ENCODE measurements at regions of chr20 and their contacts with region 1.

Region 1: DNA sequence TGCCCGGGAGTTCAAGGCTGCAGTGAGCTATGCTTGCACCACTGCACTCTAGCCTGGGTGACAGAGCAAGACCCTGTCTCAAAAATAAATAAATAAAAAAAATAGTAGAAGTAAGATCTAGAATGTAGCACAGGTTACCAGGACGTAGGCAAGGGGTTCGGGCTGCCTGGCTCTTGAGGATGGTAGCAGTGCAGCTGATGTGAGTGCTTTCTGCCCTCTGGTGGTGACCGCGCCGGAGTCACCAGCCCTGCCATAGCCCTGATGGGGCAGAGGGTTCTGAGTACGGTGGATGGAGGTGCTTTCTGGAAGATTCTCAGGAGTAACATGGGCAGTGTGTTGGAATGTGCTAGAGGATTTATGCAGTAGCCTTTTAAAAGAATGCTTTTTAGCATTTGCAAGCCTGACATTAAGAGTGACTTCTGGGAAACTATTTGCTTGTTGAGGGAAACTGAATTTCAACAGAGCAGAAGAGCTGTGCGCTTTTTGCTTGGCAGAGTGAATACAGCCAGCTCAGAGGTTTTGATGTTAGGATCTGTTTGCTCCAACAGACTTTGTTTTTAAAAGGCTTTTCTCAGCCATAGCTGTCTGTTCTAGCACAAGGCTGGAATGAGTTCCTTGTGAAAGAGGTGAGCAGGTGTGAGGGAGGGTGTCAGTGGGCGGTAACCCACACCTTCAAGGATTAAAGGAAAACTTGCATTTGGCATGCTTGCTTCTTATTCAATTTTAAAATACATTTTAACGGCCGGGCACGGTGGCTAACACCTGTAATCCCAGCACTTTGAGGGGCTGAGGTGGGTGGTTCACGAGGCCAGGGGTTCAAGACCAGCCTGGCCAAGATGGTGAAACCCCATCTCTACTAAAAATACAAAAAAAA is 65.9 kb downstream of the PTPN1 start:
- DNase-seq: no peak

Region 2: DNA sequence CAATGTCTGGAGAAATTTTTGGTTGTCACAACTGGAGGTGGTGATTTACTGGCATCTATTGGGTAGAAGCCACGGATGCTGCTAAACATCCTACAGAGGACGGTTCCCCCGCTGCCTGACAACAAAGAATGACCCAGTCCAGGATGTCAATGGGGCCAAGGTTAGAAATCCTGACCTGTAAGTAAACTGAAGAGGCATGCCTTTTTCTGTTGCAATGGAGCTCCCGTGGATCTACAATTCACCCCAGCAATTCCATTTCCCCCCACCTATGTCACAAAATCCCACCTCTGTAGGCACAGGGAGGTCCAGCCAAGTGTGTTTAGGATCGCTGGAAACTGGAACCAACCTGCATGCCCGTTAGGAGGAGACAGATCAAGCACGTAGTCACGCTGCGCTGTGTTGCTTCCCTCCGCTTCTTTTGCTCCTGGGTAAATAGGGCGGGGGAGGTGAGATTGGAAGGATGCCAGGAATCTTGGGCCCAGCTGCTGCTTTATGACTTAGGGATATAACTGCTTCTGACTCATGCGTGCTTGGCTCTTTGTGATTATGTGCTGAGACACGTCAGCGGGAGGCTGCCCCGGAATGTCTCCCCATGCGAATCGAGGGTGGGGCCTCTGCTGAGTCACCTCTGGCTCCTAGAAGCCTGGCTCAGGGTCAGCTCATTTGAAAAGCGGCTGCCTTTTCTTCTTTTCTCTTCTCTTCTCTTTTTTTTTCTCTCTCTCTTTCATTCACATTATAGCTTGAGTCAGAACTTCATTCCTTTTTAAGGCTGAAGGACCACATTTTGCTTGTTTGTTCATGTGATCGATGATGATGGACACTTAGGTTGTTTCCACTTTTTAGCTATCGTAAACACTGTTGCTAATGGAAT is 410.2 kb before region 1 on chr20:
- intact Hi-C with region 1: no loop called
- DNase-seq: peak; percentile 98

Region 3: GRCh38 chr20:50308513-50309279 is 267.4 kb before region 1 on chr20:
- intact Hi-C with region 1: loop called (anchors 10 kb)
- DNase-seq: peak; percentile 97

Region 4: DNA sequence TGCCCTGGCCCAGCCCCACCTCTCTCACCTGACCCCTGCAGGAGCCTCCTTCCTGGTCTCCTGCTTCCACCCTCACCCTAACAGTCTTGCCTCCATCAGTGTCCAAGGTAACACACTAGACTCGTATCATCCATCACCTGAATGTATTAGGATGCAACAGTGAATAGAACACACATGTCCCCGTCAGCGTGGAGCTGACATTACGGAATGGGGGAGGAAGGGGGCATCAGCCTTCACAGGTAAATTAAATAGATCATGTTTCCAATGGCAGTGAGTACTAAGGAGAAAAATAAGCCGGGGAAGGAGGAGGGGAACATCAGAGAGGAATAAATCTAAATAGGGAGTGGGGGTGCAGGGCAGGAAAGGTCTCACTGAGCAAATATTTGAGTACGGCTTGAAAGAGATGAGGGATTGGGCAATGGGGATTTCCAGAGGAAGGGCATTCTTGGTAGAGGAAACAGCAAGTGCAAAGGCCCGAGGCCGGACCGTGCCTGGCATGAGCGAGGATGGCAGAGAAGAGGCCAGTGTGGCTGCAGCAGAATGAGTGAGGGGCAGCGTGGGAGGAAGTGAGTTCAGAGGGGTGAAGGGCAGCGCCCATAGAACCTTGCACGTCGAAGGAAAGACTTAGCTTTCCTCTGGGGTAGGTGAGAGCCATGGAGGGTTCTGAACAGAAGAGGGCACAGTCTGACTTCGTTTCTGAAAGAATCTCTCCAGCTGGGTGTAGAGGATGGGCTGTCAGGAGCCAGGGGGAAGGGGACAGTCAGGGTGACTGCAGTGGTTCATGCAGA is 176.0 kb before region 1 on chr20:
- intact Hi-C with region 1: loop called (anchors 5 kb)
- DNase-seq: no peak

Region 5: GRCh38 chr20:50471204-50471610 is 104.9 kb before region 1 on chr20:
- intact Hi-C with region 1: loop called (anchors 2 kb)
- DNase-seq: no peak

Region 6: DNA sequence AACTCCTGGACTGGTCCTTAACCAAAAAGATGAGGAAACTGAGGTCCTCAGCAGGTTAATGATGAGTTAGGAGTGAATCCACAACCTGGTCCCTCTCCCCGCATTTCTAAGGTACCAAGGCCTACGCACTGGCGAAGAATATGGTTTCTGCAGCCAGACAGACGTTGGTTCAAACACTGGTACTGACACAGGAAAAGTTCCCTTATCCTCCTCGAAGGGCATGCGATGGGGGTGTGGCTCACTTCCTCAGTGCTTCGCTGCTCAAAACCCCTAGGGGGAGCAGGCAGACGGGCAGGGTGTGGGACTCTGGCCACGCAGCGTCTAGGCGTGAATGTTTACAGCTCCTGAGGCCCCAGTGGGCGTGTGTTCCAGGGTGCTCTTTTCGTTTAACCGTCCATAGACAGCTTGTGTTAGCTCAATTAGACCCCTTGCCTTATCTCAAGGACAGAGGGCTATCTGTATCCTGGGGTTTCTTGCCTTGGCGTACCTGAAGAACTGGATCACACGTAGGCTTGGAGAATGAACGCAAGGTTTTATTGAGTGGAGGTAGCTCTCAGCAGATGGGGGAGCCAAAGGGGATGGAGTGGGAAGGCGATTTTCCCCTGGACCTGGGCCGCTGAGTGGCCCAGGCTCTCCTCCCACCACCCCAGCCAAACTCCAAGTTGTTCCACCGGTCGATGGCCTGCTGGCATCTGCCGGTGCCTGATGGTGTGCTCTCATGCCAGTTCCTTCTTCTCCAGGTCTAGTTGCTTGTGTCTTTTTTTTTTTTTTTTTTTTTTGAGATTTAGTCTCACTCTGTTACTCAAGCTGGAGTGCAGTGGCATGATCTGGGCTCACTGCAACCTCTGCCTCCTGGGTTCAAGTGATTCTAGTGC is 97.7 kb before region 1 on chr20:
- intact Hi-C with region 1: loop called (anchors 1 kb)
- DNase-seq: peak; percentile 77

Region 7: DNA sequence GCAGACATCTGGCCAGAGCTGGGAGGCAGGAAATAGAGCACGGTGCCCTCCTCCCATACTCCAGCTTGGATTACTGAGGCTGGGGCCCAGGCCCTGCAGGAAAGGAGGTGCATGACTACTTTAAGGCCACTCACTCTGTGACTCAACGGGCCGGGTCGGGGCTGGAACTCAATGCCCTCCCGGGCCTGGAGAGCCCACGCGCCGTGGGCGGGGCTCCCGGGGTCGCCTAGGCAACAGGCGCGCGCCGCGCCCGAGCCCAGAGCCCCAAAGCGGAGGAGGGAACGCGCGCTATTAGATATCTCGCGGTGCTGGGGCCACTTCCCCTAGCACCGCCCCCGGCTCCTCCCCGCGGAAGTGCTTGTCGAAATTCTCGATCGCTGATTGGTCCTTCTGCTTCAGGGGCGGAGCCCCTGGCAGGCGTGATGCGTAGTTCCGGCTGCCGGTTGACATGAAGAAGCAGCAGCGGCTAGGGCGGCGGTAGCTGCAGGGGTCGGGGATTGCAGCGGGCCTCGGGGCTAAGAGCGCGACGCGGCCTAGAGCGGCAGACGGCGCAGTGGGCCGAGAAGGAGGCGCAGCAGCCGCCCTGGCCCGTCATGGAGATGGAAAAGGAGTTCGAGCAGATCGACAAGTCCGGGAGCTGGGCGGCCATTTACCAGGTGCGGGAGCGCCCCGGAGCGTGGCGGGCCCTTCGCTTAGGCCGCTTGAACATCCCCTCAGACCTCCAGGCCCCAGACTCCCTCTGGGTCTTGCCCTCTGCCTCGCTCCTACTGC is 66.0 kb before region 1 on chr20 and contains the start of gene PTPN1:
- intact Hi-C with region 1: loop called (anchors 2 kb)
- DNase-seq: peak; percentile 99
- total RNA-seq, gene PTPN1: 34.2 TPM

Region 8: GRCh38 chr20:50655311-50655880 is 79.3 kb after region 1 on chr20:
- intact Hi-C with region 1: no loop called
- DNase-seq: no peak

Region 9: DNA sequence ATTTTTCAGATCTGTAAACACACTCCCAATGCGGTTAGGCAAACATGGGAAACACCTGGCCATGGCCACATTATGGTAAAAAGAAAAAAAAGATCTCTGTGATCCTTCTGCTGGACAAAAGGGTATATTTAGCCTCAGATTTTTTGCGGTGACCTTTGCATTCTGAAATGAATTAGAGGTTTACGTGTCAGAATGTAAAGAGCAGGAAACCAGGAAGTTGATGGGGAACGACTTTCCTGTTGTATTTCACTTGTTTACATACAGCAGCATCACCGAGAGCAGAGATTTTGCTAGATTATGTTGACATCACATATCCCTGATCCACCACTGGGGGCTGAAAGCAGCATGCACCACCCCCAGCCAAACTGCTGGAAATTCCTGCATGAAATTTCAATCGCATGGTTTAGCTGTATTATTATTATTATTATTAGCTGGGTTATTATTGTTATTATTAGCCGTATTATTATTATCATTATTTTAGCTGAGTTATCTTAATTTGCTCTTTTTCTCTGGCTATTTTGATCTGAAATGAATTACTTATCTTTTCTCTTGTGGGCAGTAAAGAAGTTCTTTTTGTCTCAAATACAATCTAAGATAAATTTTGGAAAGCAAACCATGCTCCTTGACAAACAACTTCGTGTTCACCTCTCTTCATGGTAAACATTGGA is 1426.0 kb after region 1 on chr20:
- intact Hi-C with region 1: no loop called
- DNase-seq: no peak